Activated CD4-positive, alpha-beta memory T cell treated with anti-CD3 and anti-CD28 coated beads, Interleukin-2, amount 10 ng/mL, durations not matched to agents 7 days and 5 days (primary cell): ENCODE measurements at regions of chr9 and their contacts with region 1.

Region 1: DNA sequence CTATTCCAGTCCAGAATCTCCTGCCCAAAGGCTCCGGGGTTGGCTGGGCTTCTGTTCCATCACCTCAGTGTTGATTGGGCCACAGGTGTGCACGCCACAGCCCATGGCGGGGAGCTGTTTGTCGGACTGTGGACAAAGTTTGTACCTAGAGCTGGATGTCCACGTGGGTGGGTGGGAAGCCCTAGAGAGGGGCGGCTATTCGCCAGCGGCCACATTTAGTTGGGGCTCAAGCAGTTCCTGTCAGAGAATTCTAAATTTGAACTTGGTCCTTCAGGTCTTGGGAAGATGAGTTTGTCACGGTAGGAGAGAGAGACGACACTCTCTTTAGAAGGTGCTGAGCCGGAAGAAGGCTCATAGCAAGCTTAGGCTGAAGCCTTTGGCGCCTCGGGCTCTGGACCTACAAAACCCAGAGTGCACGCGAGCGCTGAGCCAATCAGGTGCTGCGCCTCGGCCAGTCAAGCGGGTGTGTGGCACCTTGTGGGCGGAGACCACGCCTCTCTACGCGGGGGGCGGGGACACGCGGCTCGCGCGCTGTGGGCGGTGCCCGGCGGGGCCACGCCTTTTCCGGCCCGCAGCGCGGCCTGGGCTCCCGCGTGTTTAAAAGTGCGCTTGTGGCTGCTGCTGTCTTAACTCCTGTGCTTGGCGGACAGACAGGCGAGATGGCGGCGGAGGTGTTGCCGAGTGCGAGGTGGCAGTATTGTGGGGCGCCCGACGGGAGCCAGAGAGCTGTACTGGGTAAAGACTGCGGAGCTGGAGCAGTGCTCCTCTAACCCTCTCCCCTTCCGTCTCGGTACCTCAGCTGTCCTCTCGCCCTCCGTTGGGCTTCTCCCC is at the start of gene POLR1E:
- DNase-seq: peak; percentile 97
- H3K4me3 Mint-ChIP-seq: peak within 1 kb of the TSS; percentile 99
- H3K27ac Mint-ChIP-seq: peak within 1 kb of the TSS; percentile 93
- H3K4me1 Mint-ChIP-seq: peaks cover 42% of the 10 kb centered on the region
- H3K27me3 Mint-ChIP-seq: peaks cover 7% of the 10 kb centered on the region
- total RNA-seq, gene POLR1E: 27.6 to 29.2 TPM

Region 2: GRCh38 chr9:37465249-37466036 is 20.2 kb before region 1 on chr9 and contains the start of gene ZBTB5:
- CTCF ChIA-PET with region 1: interaction called, 3 read pairs
- POLR2A ChIA-PET with region 1: interaction called, 75 read pairs
- DNase-seq: peak; percentile 99
- H3K4me3 Mint-ChIP-seq: peak within 1 kb of the TSS; percentile 83
- H3K27ac Mint-ChIP-seq: peak within 1 kb of the TSS; percentile 89
- H3K4me1 Mint-ChIP-seq: peaks cover 34% of the 10 kb centered on the region
- H3K27me3 Mint-ChIP-seq: no peaks in the 10 kb centered on the region
- total RNA-seq, gene ZBTB5: 10.5 to 10.6 TPM

Region 3: GRCh38 chr9:37503736-37504135 is 18.1 kb after region 1 on chr9:
- CTCF ChIA-PET with region 1: interaction called, 7 read pairs
- POLR2A ChIA-PET with region 1: interaction called, 30 read pairs
- DNase-seq: peak; percentile 65
- H3K4me3 Mint-ChIP-seq: peak overlapping the region; percentile 56
- H3K27ac Mint-ChIP-seq: peak overlapping the region; percentile 87
- H3K4me1 Mint-ChIP-seq: peaks cover 38% of the 10 kb centered on the region
- H3K27me3 Mint-ChIP-seq: no peaks in the 10 kb centered on the region

Region 4: GRCh38 chr9:37575921-37576721 is 90.5 kb after region 1 on chr9 and contains the start of gene FBXO10:
- CTCF ChIA-PET with region 1: no interaction called
- POLR2A ChIA-PET with region 1: interaction called, 23 read pairs
- DNase-seq: peak; percentile 62
- H3K4me3 Mint-ChIP-seq: peak within 1 kb of the TSS; percentile 86
- H3K27ac Mint-ChIP-seq: peak within 1 kb of the TSS; percentile 64
- H3K4me1 Mint-ChIP-seq: peaks cover 20% of the 10 kb centered on the region
- H3K27me3 Mint-ChIP-seq: peaks cover 5% of the 10 kb centered on the region
- total RNA-seq, gene FBXO10: 5.8 to 6.7 TPM

Region 5: GRCh38 chr9:37784616-37785483 is 299.2 kb after region 1 on chr9 and contains the start of gene EXOSC3:
- CTCF ChIA-PET with region 1: no interaction called
- POLR2A ChIA-PET with region 1: interaction called, 13 read pairs
- DNase-seq: peak; percentile 90
- H3K4me3 Mint-ChIP-seq: peak within 1 kb of the TSS; percentile 98
- H3K27ac Mint-ChIP-seq: peak within 1 kb of the TSS; percentile 95
- H3K4me1 Mint-ChIP-seq: peaks cover 47% of the 10 kb centered on the region
- H3K27me3 Mint-ChIP-seq: no peaks in the 10 kb centered on the region
- total RNA-seq, gene EXOSC3: 66.6 to 69.6 TPM

Region 6: GRCh38 chr9:37806271-37806670 is 320.7 kb after region 1 on chr9:
- CTCF ChIA-PET with region 1: no interaction called
- POLR2A ChIA-PET with region 1: no interaction called
- DNase-seq: no peak
- H3K4me3 Mint-ChIP-seq: no peak overlapping the region
- H3K27ac Mint-ChIP-seq: no peak overlapping the region
- H3K4me1 Mint-ChIP-seq: peaks cover 25% of the 10 kb centered on the region
- H3K27me3 Mint-ChIP-seq: no peaks in the 10 kb centered on the region